Dendritic cell treated with granulocyte-macrophage colony-stimulating factor and Interleukin-4, amounts not matched to agents 40 ng/mL and 50 ng/mL, for 4 days (primary cell): ENCODE measurements at regions of chr1 and their contacts with region 1.

Region 1: DNA sequence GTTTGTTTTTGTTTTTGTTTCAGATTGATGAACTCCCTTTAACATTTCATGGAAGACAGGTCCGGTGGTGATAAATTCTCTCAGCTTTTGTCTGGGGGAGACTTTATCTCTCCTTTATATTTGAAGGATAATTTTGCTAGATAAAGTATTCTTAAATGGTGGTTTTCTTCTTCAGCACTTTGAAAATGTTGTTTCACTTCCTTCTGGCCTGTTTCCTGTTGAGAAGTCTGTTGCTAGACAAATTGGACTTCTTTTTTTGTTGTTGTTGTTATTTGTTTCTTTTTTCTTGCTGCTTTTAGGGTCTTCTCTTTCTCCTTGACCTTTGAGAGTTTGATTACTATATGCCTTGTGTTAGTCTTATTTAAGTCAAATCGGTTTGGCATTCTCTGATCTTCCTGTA is 50.8 kb downstream of the CRP start:
- H3K4me3 Mint-ChIP-seq: no peak overlapping the region
- H3K27ac Mint-ChIP-seq: peak overlapping the region; percentile 94
- H3K4me1 Mint-ChIP-seq: peaks cover 28% of the 10 kb centered on the region
- H3K27me3 Mint-ChIP-seq: no peaks in the 10 kb centered on the region

Region 2: GRCh38 chr1:159646687-159647086 is 16.9 kb before region 1 on chr1:
- intact Hi-C with region 1: loop called (anchors 2 kb)
- H3K4me3 Mint-ChIP-seq: no peak overlapping the region
- H3K27ac Mint-ChIP-seq: peak overlapping the region; percentile 86
- H3K4me1 Mint-ChIP-seq: peaks cover 10% of the 10 kb centered on the region
- H3K27me3 Mint-ChIP-seq: no peaks in the 10 kb centered on the region